ENCODE measurements at regions of chr16 and their contacts with region 1.

Region 1: GRCh38 chr16:88002211-88002610 is 51.0 kb downstream of the BANP start:
- DNase-seq: no peak
- H3K4me3 ChIP-seq: no peak overlapping the region
- H3K27ac ChIP-seq: no peak overlapping the region
- H3K4me1 ChIP-seq: no peaks in the 10 kb centered on the region
- H3K27me3 ChIP-seq: no peaks in the 10 kb centered on the region
- CTCF ChIP-seq: no peak

Region 2: DNA sequence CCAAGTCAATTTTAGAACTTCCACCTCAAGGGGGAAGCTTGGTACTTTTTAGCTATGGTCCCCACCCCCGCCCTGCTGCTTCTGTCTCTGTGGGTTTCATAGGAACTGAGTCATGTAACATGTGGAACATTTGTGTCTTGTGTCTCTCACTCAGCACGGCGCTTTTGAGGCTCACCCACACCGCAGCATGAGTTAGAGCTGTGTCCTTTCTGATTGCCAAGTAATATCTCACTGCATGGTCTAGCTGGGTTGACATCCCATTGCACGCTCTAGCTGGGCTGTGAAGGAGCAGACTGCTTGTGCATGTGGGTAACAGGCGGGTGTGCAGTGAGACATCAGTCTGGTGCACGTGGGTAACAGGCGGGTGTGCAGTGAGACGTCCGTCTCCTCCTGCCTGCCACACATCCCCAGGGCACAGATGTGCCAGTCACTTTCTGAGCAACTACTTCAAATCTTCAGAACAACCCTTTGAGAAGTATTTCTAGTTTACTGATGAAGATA is 106.5 kb before region 1 on chr16:
- CTCF ChIA-PET with region 1: no interaction called
- POLR2A ChIA-PET with region 1: no interaction called
- intact Hi-C with region 1: no loop called
- DNase-seq: no peak
- H3K4me3 ChIP-seq: no peak overlapping the region
- H3K27ac ChIP-seq: no peak overlapping the region
- H3K4me1 ChIP-seq: no peaks in the 10 kb centered on the region
- H3K27me3 ChIP-seq: no peaks in the 10 kb centered on the region
- CTCF ChIP-seq: no peak

Region 3: GRCh38 chr16:88069397-88070168 is 67.4 kb after region 1 on chr16:
- CTCF ChIA-PET with region 1: no interaction called
- POLR2A ChIA-PET with region 1: no interaction called
- intact Hi-C with region 1: no loop called
- DNase-seq: no peak
- H3K4me3 ChIP-seq: no peak overlapping the region
- H3K27ac ChIP-seq: no peak overlapping the region
- H3K4me1 ChIP-seq: no peaks in the 10 kb centered on the region
- H3K27me3 ChIP-seq: no peaks in the 10 kb centered on the region
- CTCF ChIP-seq: no peak

Region 4: GRCh38 chr16:88315543-88316105 is 313.4 kb after region 1 on chr16:
- CTCF ChIA-PET with region 1: no interaction called
- POLR2A ChIA-PET with region 1: interaction called, 10 read pairs
- intact Hi-C with region 1: no loop called
- DNase-seq: peak; percentile 77 to 90
- H3K4me3 ChIP-seq: peak overlapping the region; percentile 38; the same call in 1 of the 2 replicates
- H3K27ac ChIP-seq: peak overlapping the region; percentile 49
- H3K4me1 ChIP-seq: peaks cover 15% of the 10 kb centered on the region
- H3K27me3 ChIP-seq: no peaks in the 10 kb centered on the region
- CTCF ChIP-seq: no peak